Psoas muscle (tissue), 8 donors: ENCODE measurements at regions of chr10 and their contacts with region 1.

Region 1: DNA sequence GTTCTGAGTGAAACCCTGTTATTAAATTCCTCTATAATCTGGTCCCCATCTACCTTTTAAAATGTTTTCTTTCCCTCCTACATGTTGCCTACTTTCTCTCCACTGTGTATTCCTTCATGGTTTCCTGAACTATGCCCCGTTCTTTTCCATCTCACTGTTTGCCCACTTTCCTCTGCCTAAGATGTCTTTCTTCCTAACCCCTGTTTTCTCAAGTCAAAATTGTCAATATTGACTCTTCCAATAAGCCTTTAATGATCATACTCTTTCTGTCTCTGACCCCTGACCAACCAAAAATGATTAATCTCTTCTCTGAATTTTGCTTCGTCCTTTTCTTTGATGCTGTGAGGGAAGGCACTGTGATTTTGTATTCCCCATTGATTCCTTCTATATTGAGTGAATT is 30.6 kb upstream of the OIT3 start:
- DNase-seq: no peak
- ATAC-seq: no peak
- H3K4me3 ChIP-seq: no peak overlapping the region
- H3K27ac ChIP-seq: no peak overlapping the region
- H3K4me1 ChIP-seq: no peaks in the 10 kb centered on the region
- H3K27me3 ChIP-seq: no peaks in the 10 kb centered on the region
- CTCF ChIP-seq: no peak

Region 2: DNA sequence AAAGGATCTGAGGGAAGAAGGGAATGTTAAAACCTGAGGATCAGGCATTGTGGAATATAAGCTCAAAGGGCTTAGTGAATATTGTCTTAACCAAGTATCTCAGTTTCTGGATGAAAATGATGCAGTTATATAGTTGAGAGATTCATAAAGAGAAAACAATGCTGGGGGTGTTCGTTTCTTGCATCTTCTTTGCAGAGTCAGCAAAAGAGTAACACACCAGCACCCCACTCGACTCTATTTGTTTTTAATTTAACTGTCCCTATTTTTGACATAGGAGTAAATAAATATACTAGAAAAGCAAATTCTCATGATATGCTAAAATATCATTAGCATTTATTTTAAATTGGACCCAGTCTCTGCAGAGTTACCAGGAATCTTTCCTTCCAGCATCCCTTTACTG is 23.0 kb after region 1 on chr10:
- intact Hi-C with region 1: loop called in 1 of 2 experiments (anchors 1 kb)
- DNase-seq: no peak
- ATAC-seq: no peak
- H3K4me3 ChIP-seq: no peak overlapping the region
- H3K27ac ChIP-seq: no peak overlapping the region
- H3K4me1 ChIP-seq: no peaks in the 10 kb centered on the region
- H3K27me3 ChIP-seq: no peaks in the 10 kb centered on the region
- CTCF ChIP-seq: no peak